CD8-positive, alpha-beta T cell (primary cell): ENCODE measurements at regions of chr1 and their contacts with region 1.

Region 1: GRCh38 chr1:198556971-198557370 is 16.5 kb upstream of the ATP6V1G3 start:
- DNase-seq: peak; percentile 37 to 94 (median 63)
- ATAC-seq: peak; percentile 87
- H3K4me3 ChIP-seq: peak overlapping the region; percentile 3 to 33
- H3K4me3 Mint-ChIP-seq: peak overlapping the region; percentile 65
- H3K27ac ChIP-seq: peak overlapping the region; percentile 8 to 68
- H3K27ac Mint-ChIP-seq: peak overlapping the region; percentile 64
- H3K4me1 ChIP-seq: peaks cover 88% of the 10 kb centered on the region
- H3K4me1 Mint-ChIP-seq: peaks cover 87% of the 10 kb centered on the region
- H3K27me3 ChIP-seq: no peaks in the 10 kb centered on the region
- H3K27me3 Mint-ChIP-seq: no peaks in the 10 kb centered on the region
- CTCF ChIP-seq: no peak

Region 2: GRCh38 chr1:197595304-197595904 is 961.6 kb before region 1 on chr1:
- CTCF ChIA-PET with region 1: no interaction called
- POLR2A ChIA-PET with region 1: no interaction called
- intact Hi-C with region 1: no loop called
- DNase-seq: no peak
- ATAC-seq: no peak
- H3K4me3 ChIP-seq: no peak overlapping the region
- H3K4me3 Mint-ChIP-seq: no peak overlapping the region
- H3K27ac ChIP-seq: no peak overlapping the region
- H3K27ac Mint-ChIP-seq: no peak overlapping the region
- H3K4me1 ChIP-seq: no peaks in the 10 kb centered on the region
- H3K4me1 Mint-ChIP-seq: no peaks in the 10 kb centered on the region
- H3K27me3 ChIP-seq: no peaks in the 10 kb centered on the region
- H3K27me3 Mint-ChIP-seq: no peaks in the 10 kb centered on the region
- CTCF ChIP-seq: no peak

Region 3: GRCh38 chr1:198520524-198521254 is 36.3 kb before region 1 on chr1:
- CTCF ChIA-PET with region 1: interaction called, 3 read pairs
- POLR2A ChIA-PET with region 1: interaction called, 3 read pairs
- intact Hi-C with region 1: loop called (anchors 2 to 5 kb)
- DNase-seq: peak in 2 of 9 experiments; percentile 57 to 73
- ATAC-seq: peak; percentile 57
- H3K4me3 ChIP-seq: peak overlapping the region; percentile 11 to 30
- H3K4me3 Mint-ChIP-seq: peak overlapping the region; percentile 72
- H3K27ac ChIP-seq: peak overlapping the region; percentile 6 to 75
- H3K27ac Mint-ChIP-seq: peak overlapping the region; percentile 89
- H3K4me1 ChIP-seq: peaks cover 58% of the 10 kb centered on the region
- H3K4me1 Mint-ChIP-seq: peaks cover 72% of the 10 kb centered on the region
- H3K27me3 ChIP-seq: no peaks in the 10 kb centered on the region
- H3K27me3 Mint-ChIP-seq: no peaks in the 10 kb centered on the region
- CTCF ChIP-seq: no peak

Region 4: DNA sequence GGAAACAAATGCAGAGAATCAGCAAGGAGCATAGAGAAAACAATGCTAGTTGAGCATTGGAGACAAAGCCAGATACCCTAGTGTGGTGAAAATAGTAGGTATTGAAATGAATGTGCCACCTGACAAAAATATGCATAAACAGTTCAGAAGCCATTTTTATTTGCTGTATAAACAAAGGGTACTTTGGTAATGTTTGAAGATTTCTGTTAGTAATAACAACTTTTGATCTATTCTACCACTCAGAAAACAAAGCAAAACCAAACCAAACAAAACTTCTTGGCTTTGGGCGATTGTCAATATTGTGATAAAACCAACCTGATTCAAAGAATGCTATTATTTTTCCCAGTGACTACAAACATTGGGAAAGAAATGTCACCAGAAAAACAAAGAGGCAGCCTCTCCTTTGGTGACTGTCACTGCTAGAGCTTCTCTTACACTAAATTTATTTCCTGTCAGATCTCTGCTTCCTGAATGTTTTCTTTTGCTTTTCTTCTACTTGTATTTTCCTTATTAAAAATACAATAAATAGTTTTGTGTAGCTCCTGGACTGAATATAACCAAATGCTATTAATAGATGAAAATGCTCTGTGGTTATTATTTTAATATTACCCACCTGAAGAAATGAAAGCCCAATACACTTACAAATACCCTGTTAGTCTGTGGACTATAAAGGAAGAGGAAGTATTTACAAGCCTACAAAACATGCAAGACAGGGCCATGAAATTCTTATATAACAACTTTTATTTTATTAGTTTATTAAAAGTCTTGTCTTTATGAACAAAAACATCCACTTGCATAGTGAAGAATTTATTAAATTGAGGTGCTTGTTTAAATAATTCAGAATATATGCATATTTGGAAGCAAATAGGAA is 22.2 kb before region 1 on chr1:
- CTCF ChIA-PET with region 1: no interaction called
- POLR2A ChIA-PET with region 1: interaction called, 5 read pairs
- intact Hi-C with region 1: loop called (anchors 2 to 5 kb)
- DNase-seq: peak in 1 of 9 experiments; percentile 34
- ATAC-seq: peak; percentile 48
- H3K4me3 ChIP-seq: peak overlapping the region in 1 of 2 experiments; percentile 6
- H3K4me3 Mint-ChIP-seq: peak overlapping the region; percentile 67
- H3K27ac ChIP-seq: peak overlapping the region; percentile 43 to 68
- H3K27ac Mint-ChIP-seq: peak overlapping the region; percentile 93
- H3K4me1 ChIP-seq: peaks cover 67% of the 10 kb centered on the region
- H3K4me1 Mint-ChIP-seq: peaks cover 78% of the 10 kb centered on the region
- H3K27me3 ChIP-seq: no peaks in the 10 kb centered on the region
- H3K27me3 Mint-ChIP-seq: no peaks in the 10 kb centered on the region
- CTCF ChIP-seq: no peak

Region 5: GRCh38 chr1:198598796-198599321 is 41.9 kb after region 1 on chr1:
- CTCF ChIA-PET with region 1: interaction called, 4 read pairs
- POLR2A ChIA-PET with region 1: no interaction called
- intact Hi-C with region 1: loop called (anchors 5 kb)
- DNase-seq: peak in 2 of 9 experiments; percentile 17 to 31
- ATAC-seq: peak; percentile 59
- H3K4me3 ChIP-seq: no peak overlapping the region
- H3K4me3 Mint-ChIP-seq: peak overlapping the region; percentile 63
- H3K27ac ChIP-seq: peak overlapping the region in 1 of 2 experiments; percentile 58
- H3K27ac Mint-ChIP-seq: peak overlapping the region; percentile 91
- H3K4me1 ChIP-seq: peaks cover 65% of the 10 kb centered on the region
- H3K4me1 Mint-ChIP-seq: peaks cover 86% of the 10 kb centered on the region
- H3K27me3 ChIP-seq: no peaks in the 10 kb centered on the region
- H3K27me3 Mint-ChIP-seq: no peaks in the 10 kb centered on the region
- CTCF ChIP-seq: no peak

Region 6: DNA sequence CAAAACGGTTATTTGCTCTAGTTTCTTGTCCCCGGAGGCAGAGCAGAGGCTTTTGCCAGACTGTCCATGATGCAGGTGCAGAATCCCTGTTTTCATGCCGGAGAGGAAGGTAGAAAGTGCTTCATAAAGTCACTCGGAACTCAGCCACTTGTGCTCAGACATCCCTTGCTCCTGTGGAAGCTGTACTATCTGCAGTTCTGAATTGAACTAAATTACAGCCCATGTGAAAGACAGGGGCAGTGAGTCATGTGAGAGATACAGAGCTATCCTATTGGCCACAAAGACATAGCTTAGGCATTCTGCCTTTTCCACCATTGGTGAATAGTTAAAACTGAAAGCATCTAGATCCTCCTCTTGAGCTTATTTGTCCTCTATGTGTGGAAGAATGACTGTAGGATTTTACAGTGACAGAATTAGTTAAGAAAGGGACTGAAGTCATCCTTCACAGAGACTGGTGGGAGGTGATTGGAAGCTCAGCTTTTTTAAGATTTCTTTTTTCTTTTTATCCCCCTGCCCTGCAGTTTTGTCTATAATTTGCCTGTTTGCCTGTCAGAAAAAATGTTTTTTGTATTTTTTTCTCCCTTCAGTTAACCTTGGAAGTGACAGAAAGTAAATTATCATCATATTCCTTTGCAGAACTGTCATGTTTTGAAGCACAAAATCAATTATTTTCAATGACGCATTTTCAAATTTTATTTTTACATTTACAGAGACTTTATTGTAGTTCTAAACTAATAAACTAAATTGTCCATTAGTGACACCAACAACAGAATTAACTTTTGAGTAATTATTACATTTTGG is 380.5 kb after region 1 on chr1:
- CTCF ChIA-PET with region 1: no interaction called
- POLR2A ChIA-PET with region 1: no interaction called
- intact Hi-C with region 1: loop called in 1 of 2 experiments (anchors 10 kb)
- DNase-seq: peak in 8 of 9 experiments; percentile 15 to 86 (median 33)
- ATAC-seq: peak; percentile 84
- H3K4me3 ChIP-seq: peak overlapping the region; percentile 42 to 59
- H3K4me3 Mint-ChIP-seq: peak overlapping the region; percentile 87
- H3K27ac ChIP-seq: peak overlapping the region; percentile 39 to 60
- H3K27ac Mint-ChIP-seq: peak overlapping the region; percentile 91
- H3K4me1 ChIP-seq: peaks cover 28% of the 10 kb centered on the region
- H3K4me1 Mint-ChIP-seq: peaks cover 25% of the 10 kb centered on the region
- H3K27me3 ChIP-seq: no peaks in the 10 kb centered on the region
- H3K27me3 Mint-ChIP-seq: no peaks in the 10 kb centered on the region
- CTCF ChIP-seq: no peak